A673 (cell line): ENCODE measurements at regions of chr17 and their contacts with region 1.

Region 1: GRCh38 chr17:57606111-57606875 is 138.8 kb downstream of the CCDC182 start:
- DNase-seq: no peak
- H3K4me3 ChIP-seq: no peak overlapping the region
- H3K27ac ChIP-seq: peak overlapping the region; percentile 53
- H3K4me1 ChIP-seq: peaks cover 23% of the 10 kb centered on the region
- H3K27me3 ChIP-seq: no peaks in the 10 kb centered on the region
- CTCF ChIP-seq: no peak

Region 2: DNA sequence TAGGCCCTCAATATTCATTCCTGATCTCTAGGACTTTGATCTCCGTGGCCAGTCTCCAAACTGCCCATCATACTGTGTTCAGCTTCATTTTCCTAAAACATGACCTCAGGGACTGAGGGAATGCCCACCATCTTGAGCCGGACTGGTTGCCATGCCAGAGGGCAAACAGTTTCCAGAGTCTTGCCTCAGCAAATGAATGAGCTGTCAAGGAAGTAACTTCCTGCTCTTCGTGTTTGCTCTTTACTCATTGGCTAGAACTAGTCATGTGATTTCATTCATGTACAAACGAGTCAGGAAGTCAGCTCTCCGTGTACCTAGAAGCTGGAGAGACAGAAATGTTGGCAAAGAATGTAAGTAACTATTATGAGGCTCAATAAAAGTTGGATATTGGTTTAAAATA is 1402.9 kb before region 1 on chr17:
- CTCF ChIA-PET with region 1: no interaction called
- POLR2A ChIA-PET with region 1: no interaction called
- intact Hi-C with region 1: no loop called
- DNase-seq: peak; percentile 30
- H3K4me3 ChIP-seq: no peak overlapping the region
- H3K27ac ChIP-seq: no peak overlapping the region
- H3K4me1 ChIP-seq: no peaks in the 10 kb centered on the region
- H3K27me3 ChIP-seq: no peaks in the 10 kb centered on the region
- CTCF ChIP-seq: no peak

Region 3: DNA sequence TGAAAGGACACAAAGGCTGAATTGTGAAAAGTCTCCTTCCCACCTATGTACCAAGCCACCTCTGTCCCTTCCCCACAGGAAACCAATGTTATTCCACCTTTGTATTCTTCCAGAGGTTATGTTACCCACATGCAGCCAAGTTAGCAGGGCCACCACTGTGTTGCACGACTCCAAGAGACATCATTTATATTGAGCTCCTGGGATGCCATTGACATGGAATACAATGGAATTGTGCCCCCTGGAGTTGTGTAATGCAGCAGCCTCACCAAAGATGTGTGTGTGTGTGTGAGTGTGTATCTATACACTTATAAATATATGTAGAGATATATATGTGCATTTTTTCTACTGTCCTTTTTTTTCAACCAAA is 371.6 kb before region 1 on chr17:
- CTCF ChIA-PET with region 1: interaction called, 12 read pairs
- POLR2A ChIA-PET with region 1: no interaction called
- intact Hi-C with region 1: no loop called
- DNase-seq: no peak
- H3K4me3 ChIP-seq: no peak overlapping the region
- H3K27ac ChIP-seq: no peak overlapping the region
- H3K4me1 ChIP-seq: no peaks in the 10 kb centered on the region
- H3K27me3 ChIP-seq: no peaks in the 10 kb centered on the region
- CTCF ChIP-seq: 0 out of 2 replicates have a peak, but pooled peaks have one; percentile 9

Region 4: DNA sequence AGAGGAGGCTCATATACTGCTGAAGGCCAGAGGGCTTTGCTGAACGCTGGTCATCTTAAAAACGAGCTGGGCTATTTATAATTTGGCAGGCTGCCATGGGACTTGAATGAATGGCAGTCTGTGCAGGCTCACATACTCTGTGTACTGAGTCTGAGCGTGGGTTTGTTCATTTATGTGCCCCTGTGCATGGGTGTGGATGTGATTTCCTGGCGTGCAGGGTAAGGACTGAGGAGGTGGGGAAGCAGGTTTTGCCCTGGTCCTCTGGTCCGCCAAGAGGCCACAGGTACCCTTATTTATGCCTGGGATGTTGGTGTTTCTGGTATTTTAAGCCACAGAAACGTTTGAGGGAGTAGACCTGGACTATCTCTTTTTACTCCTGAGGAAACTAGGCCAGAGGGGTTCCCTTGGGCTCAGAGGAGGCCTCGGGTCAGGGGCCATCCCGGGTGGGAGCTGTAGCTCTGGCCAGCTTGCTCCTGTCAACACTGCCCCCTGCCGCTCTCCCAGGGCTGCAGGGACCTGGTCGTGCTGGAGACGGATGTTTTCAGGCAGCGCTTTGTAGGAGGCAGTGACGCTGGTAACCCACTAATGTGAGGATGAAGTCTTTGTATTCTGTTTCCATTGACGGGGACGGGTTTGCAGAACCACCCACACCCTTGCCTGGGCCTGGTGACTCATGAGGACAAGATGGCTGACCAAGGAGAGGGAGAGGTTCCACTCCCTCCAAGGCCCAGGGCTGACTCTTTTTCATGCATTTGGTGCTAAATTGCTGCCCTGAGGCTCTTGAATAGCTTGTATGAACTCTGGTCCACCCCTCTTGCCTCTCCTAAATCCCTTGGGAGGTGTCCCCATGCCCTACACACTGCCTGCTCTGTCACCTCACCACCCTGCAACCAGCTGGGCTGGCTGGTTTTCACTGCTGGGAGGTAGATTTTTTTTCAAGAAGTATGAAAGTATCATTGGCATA is 165.5 kb before region 1 on chr17:
- CTCF ChIA-PET with region 1: no interaction called
- POLR2A ChIA-PET with region 1: no interaction called
- intact Hi-C with region 1: no loop called
- DNase-seq: peak; percentile 59
- H3K4me3 ChIP-seq: no peak overlapping the region
- H3K27ac ChIP-seq: peak overlapping the region; percentile 35
- H3K4me1 ChIP-seq: peaks cover 32% of the 10 kb centered on the region
- H3K27me3 ChIP-seq: no peaks in the 10 kb centered on the region
- CTCF ChIP-seq: no peak